ENCODE measurements at regions of chr20 and their contacts with region 1.

Region 1: DNA sequence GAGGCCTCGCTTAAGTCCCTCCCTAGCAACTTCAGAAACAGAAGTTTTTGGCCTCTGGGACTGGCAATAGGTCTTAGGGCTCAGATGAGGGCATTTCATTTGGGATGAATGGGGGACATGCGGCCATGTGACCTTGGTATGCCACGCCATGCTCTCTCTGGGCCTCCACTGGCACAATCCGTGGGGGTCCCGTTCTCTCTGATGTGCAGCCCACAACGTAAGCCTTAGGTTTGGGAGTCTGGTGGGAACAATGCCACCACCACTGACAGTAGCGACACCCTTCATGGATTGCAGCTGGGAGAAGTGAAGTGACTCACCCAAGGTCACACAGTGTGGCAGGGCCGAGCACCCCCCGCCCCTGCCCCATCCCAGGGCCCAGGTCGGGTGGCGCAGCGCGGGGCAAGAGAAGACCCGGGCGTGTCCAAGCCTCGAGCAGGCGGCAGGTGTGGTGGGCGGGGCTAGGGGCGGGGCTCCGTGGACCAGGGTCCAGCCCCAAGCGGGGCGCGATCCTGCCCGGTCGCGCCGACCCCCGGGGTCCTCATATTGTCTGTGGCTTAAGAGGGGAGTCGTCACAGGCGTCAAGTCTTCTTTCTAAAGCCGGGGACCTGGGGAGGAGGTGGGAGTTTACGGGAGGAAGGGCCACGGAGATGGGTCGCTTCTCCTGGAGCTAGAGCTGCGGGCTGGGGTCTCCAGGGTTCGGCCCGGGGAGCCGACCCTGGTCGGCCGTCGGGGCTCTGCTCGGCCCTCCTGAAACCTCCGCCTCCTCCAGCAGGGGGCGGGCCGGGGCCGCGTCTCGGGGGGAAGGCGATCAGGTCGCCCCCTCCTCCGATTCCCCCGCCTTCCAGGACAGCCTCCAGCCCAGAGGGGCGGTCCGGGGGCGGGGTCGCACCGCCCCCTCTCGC is 698 bp upstream of the CEBPB start:
- DNase-seq: peak; percentile 89 to 92 (median 92)
- ATAC-seq: peak; percentile 77
- H3K4me3 ChIP-seq: peak overlapping the region; percentile 31 to 89
- H3K27ac ChIP-seq: peak overlapping the region; percentile 96 to 100 (median 99)
- H3K4me1 ChIP-seq: peaks cover 38% of the 10 kb centered on the region
- H3K27me3 ChIP-seq: no peaks in the 10 kb centered on the region
- CTCF ChIP-seq: peak; percentile 71 to 90 (median 80)
- POLR2A ChIP-seq: no peak

Region 2: DNA sequence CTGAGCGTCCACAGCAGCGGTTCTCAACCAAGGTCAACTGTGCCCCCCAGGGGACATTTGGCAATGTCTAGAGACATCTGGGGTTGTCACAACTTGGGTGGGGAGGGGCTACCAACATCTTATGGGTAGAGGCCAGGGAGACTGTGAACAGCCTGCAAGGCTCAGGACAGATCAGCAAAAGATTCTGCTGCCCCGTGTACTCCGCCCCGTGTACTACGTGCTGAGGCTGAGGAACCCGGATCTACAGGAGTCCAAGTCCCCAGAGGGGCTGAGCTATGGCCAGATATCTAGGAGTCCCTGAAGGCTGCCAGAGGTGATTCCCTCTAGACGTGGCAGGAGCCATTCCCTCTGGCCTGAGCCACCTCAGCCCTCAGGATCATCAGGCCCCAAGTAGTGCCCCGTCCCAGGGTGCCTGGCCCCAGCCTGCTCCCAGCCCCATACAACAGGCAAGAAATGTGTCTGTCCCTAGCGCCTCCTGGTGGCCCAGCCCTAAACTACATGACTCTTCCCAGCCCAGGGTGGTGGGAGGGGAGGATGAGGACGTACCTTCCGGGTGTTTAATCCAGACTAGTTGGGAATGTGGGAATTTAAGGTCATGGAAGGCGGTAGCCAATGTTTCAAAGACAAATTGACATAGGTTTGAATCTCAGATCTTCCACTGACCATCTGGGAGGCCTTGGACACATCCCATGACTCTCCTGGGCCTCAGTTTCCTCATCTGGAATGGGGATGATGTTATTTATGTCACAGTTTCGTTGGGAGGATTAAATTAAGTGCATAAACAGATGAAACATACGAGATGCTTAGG is 270.7 kb after region 1 on chr20:
- intact Hi-C with region 1: loop called (anchors 5 kb)
- DNase-seq: peak; percentile 87 to 93 (median 92)
- ATAC-seq: peak; percentile 87
- H3K4me3 ChIP-seq: no peak overlapping the region
- H3K27ac ChIP-seq: peak overlapping the region; percentile 10 to 81 (median 52)
- H3K4me1 ChIP-seq: peaks cover 28% of the 10 kb centered on the region
- H3K27me3 ChIP-seq: no peaks in the 10 kb centered on the region
- CTCF ChIP-seq: peak; percentile 74 to 97 (median 95)
- POLR2A ChIP-seq: no peak

Region 3: DNA sequence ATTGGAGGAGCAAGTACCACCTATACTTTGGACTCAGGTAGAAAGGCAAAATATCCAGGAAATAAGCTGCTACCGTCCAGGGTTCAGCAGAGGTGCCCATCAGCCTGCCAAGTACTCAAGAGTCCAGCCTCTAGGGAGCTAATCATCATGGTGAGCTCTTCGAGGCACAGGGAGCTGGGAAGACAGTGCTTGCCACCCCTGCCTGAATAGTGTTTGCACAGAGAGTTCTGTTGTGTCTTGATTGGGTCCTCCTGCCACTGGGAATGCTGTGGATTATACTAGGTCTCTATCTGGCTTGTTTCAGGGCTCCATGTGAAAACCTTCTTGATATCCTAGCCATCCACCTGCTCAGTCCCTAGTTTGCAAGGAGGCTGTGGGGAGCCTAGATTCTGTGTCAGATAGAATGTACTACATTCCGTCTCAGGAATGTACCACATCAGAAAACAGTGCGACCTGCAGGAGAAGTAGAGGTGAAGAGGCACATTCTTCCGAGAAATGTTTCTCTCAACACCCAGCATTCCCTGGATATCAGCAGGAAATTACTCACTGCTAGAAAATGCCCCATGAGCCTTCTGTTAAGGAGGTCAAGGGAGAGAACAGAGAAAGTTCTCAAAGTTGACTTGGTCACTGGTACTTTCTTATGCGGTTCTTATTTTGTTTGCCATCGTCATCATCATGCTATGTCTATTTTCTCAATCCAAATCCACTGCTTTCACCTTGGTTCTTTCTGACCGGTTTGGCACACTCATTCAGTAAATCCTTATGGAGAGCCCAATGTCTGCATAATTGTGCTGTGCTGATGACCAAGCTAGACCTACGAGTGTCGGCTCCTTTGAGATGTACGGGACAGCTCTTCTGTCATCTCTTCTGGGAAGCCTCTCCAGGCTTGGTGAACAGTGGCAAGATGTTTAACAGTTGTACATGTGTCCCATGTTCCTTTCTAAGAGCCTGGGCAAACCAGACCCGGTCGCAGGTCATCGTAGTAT is 351.0 kb after region 1 on chr20:
- intact Hi-C with region 1: no loop called
- DNase-seq: no peak
- ATAC-seq: peak; percentile 37
- H3K4me3 ChIP-seq: no peak overlapping the region
- H3K27ac ChIP-seq: no peak overlapping the region
- H3K4me1 ChIP-seq: peaks cover 13% of the 10 kb centered on the region
- H3K27me3 ChIP-seq: no peaks in the 10 kb centered on the region
- CTCF ChIP-seq: no peak
- POLR2A ChIP-seq: no peak

Region 4: GRCh38 chr20:50575847-50576720 is 386.2 kb after region 1 on chr20:
- intact Hi-C with region 1: loop called (anchors 5 kb)
- DNase-seq: peak; percentile 50 to 71 (median 59)
- ATAC-seq: peak; percentile 47
- H3K4me3 ChIP-seq: no peak overlapping the region
- H3K27ac ChIP-seq: no peak overlapping the region
- H3K4me1 ChIP-seq: peaks cover 20% of the 10 kb centered on the region
- H3K27me3 ChIP-seq: no peaks in the 10 kb centered on the region
- CTCF ChIP-seq: peak; percentile 22 to 56 (median 45)
- POLR2A ChIP-seq: no peak

Measured in body of pancreas (tissue), 4 donors.